GM12878 (cell line): ENCODE measurements at regions of chr1 and their contacts with region 1.

Region 1: DNA sequence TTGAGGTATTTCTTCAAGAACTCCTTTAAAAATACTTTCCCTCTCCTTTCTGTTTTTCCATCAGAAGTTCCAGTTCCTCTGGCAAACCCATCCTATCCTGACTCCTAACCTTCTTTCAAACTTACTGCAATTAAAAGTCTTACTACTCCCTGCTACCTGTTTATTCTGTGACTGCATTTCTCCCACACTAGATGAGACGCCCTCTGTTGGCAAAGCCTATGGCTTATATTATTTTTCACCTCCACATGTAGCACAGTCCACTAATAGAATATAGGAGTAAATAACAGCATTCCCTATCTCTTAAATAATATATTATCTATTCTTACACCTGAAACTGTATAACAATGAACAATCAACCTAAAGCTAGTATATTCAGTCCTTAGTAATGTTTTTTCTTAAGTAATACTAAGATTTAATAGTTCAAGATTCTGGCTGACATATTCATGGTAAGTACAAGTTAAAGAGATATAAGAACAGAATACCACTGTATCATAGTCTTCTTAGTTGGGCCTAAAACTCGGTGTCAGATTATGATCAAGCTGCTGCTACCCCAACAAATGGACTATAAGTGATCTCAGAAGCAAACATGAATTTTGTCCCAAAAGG is 54.8 kb downstream of the RAB3GAP2 start:
- DNase-seq: no peak
- ATAC-seq: peak; percentile 14; the same call in 1 of the 3 replicates
- H3K4me3 ChIP-seq: no peak overlapping the region
- H3K27ac ChIP-seq: no peak overlapping the region
- H3K4me1 ChIP-seq: peaks cover 14% of the 10 kb centered on the region
- H3K27me3 ChIP-seq: no peaks in the 10 kb centered on the region
- CTCF ChIP-seq: peak; percentile 45 to 54 (median 53); a peak in 5 of 6 replicates
- EP300 ChIP-seq: no peak
- POLR2A ChIP-seq: no peak
- RAD21 ChIP-seq: peak; percentile 37

Region 2: DNA sequence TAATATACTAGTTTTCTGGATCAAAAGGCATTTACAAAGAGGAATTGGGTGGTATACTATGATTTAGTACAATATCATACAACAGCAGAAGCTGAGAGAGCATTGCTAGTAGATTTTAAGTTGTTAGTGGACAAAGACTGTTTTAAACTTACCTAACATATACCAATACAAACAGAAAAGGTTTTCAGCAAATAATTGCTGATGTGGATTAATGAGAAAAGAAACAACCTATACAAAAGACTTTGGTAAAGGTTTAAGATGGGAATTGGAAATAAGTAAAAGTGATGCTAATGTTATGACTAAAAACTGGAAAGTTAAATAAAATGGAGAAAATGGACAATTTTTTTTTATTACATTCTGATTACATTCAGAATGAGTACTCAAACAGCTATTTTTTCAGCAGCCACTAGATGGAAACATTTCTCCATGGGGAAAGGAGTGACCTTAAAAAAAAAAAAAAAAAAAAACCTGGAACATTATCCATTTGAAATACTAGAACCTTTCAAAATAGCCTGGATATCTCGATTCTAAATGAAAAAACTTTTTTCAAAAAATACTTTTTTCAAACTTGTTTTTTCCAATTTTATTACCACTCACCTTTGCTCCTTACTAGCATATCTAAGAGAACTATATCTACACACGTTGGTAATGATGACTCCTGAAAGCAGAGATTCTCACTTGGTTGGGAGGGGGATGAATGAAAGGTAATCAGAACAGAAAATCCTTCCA is 226.5 kb before region 1 on chr1:
- CTCF ChIA-PET with region 1: interaction called, 52 read pairs
- POLR2A ChIA-PET with region 1: interaction called, 6 read pairs
- RAD21 ChIA-PET with region 1: interaction called, 18 read pairs
- SMC1A ChIA-PET with region 1: interaction called, 7 read pairs
- in situ Hi-C with region 1: no loop called
- intact Hi-C with region 1: no loop called
- DNase-seq: no peak
- ATAC-seq: no peak
- H3K4me3 ChIP-seq: no peak overlapping the region
- H3K27ac ChIP-seq: no peak overlapping the region
- H3K4me1 ChIP-seq: peaks cover 4% of the 10 kb centered on the region
- H3K27me3 ChIP-seq: no peaks in the 10 kb centered on the region
- CTCF ChIP-seq: peak; percentile 46 to 55 (median 52); a peak in 5 of 6 replicates
- EP300 ChIP-seq: no peak
- POLR2A ChIP-seq: no peak
- RAD21 ChIP-seq: peak; percentile 62

Region 3: DNA sequence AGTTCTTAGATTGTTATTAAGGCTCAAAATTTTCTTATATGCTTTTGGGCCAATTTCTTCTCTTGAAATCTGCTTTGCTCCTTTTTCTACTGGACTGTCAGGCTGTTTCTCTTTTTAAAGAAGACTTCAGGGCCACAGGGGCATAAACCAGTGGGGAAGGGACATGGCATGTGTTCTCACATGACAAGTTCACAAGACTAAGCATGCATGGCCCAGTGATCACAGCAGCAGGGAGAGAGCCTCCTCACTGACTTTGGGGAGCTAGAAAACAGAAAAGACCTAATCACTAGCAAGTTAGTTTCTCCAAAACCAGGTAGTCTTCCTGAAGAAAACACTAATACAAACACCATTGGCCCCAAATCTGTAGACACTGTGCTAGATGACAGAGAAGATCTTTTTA is 10.1 kb before region 1 on chr1:
- CTCF ChIA-PET with region 1: interaction called, 15 read pairs
- POLR2A ChIA-PET with region 1: no interaction called
- RAD21 ChIA-PET with region 1: interaction called, 6 read pairs
- SMC1A ChIA-PET with region 1: interaction called, 6 read pairs
- in situ Hi-C with region 1: no loop called
- intact Hi-C with region 1: no loop called
- DNase-seq: no peak
- ATAC-seq: no peak
- H3K4me3 ChIP-seq: no peak overlapping the region
- H3K27ac ChIP-seq: no peak overlapping the region
- H3K4me1 ChIP-seq: no peaks in the 10 kb centered on the region
- H3K27me3 ChIP-seq: no peaks in the 10 kb centered on the region
- CTCF ChIP-seq: no peak
- EP300 ChIP-seq: no peak
- POLR2A ChIP-seq: no peak
- RAD21 ChIP-seq: no peak

Region 4: DNA sequence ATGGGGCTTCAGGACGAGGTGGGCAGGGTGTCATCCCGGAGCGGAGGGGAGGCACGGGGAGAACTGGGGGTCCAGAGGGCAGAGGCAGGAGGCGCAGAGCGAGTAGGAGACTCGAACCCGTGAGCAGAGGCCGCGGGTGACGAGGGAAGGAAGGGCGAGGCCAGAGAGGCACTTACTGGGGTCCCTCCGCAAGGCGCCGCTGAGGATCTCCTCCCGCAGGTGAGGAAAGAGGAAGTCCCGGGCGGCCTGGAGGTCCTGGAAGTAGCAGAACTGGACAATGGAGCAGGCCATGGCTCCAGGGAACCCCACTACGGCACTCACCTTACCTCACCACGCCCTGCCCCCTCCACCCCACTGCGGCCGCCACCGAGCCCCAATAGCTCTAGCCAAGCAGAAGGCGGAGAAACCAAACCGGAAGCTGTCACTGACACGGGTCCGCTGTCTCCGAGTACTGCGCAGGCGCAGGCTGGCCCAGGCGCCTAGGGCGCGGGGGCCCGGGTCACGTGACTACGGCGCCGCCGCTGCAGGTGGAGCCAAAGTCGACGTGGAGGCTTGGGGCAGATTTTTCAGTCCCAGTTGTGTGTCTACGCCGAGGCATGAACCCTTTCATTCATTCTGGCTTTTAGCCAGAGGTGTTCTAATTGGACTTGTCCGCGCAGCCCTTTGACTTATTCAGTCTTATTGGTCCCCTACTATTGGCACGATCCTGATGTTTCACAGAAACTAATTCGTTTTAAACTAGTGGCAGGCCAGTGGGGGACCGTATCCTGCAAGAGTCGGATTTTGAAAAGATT is 54.8 kb after region 1 on chr1 and contains the start of gene RAB3GAP2:
- CTCF ChIA-PET with region 1: interaction called, 43 read pairs
- POLR2A ChIA-PET with region 1: interaction called, 55 read pairs
- RAD21 ChIA-PET with region 1: interaction called, 189 read pairs
- SMC1A ChIA-PET with region 1: interaction called, 250 read pairs
- in situ Hi-C with region 1: no loop called
- intact Hi-C with region 1: loop called (anchors 1 kb)
- DNase-seq: peak; percentile 89
- ATAC-seq: peak; percentile 95
- H3K4me3 ChIP-seq: peak within 1 kb of the TSS; percentile 96
- H3K27ac ChIP-seq: peak within 1 kb of the TSS; percentile 93
- H3K4me1 ChIP-seq: peaks cover 5% of the 10 kb centered on the region; the same call in 1 of the 2 replicates
- H3K27me3 ChIP-seq: no peaks in the 10 kb centered on the region
- CTCF ChIP-seq: no peak
- EP300 ChIP-seq: peak in 1 of 2 experiments; percentile 53; a peak in 1 of 4 replicates
- POLR2A ChIP-seq: peak; percentile 97
- RAD21 ChIP-seq: no peak
- polyA plus RNA-seq, gene RAB3GAP2: 11.9 to 15.6 TPM

Region 5: GRCh38 chr1:220294846-220295301 is 77.4 kb after region 1 on chr1:
- CTCF ChIA-PET with region 1: interaction called, 84 read pairs
- POLR2A ChIA-PET with region 1: interaction called, 5 read pairs
- RAD21 ChIA-PET with region 1: interaction called, 50 read pairs
- SMC1A ChIA-PET with region 1: interaction called, 26 read pairs
- in situ Hi-C with region 1: no loop called
- intact Hi-C with region 1: loop called (anchors 2 kb)
- DNase-seq: no peak
- ATAC-seq: no peak
- H3K4me3 ChIP-seq: no peak overlapping the region
- H3K27ac ChIP-seq: no peak overlapping the region
- H3K4me1 ChIP-seq: no peaks in the 10 kb centered on the region
- H3K27me3 ChIP-seq: no peaks in the 10 kb centered on the region
- CTCF ChIP-seq: no peak
- EP300 ChIP-seq: no peak
- POLR2A ChIP-seq: no peak
- RAD21 ChIP-seq: no peak

Region 6: DNA sequence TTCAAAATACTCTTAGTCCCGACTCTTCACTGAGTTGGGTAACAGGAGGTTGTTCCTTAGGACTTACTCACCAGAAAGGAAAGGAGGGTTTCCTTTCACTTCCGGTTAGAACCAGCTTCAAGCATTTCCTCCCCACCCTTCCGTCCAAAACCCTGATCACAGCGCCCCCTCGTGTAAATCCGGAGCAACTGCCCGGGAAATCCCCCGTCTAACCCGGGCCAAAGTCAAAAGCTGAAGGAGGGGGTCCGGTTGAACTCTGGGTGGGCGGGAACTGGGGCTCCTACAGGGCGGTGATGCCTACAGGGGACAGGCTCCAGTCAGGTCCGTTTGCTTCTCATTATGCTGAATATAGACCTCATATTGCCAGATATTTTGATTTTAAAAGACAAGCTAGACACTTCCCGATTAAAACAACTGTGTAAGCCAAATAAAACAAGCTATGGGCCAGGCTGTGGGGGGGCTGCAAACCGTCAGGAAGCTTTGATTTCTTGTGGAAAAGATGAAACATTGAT is 515.7 kb after region 1 on chr1:
- CTCF ChIA-PET with region 1: interaction called, 35 read pairs
- POLR2A ChIA-PET with region 1: no interaction called
- RAD21 ChIA-PET with region 1: interaction called, 31 read pairs
- SMC1A ChIA-PET with region 1: interaction called, 11 read pairs
- in situ Hi-C with region 1: no loop called
- intact Hi-C with region 1: no loop called
- DNase-seq: peak; percentile 13
- ATAC-seq: peak; percentile 96
- H3K4me3 ChIP-seq: no peak overlapping the region
- H3K27ac ChIP-seq: no peak overlapping the region
- H3K4me1 ChIP-seq: no peaks in the 10 kb centered on the region
- H3K27me3 ChIP-seq: no peaks in the 10 kb centered on the region
- CTCF ChIP-seq: peak; percentile 78 to 81 (median 80)
- EP300 ChIP-seq: no peak
- POLR2A ChIP-seq: no peak
- RAD21 ChIP-seq: peak; percentile 91

Region 7: GRCh38 chr1:220810179-220810653 is 592.7 kb after region 1 on chr1:
- CTCF ChIA-PET with region 1: no interaction called
- POLR2A ChIA-PET with region 1: no interaction called
- RAD21 ChIA-PET with region 1: no interaction called
- SMC1A ChIA-PET with region 1: no interaction called
- in situ Hi-C with region 1: no loop called
- intact Hi-C with region 1: no loop called
- DNase-seq: peak; percentile 8
- ATAC-seq: peak; percentile 95
- H3K4me3 ChIP-seq: no peak overlapping the region
- H3K27ac ChIP-seq: no peak overlapping the region
- H3K4me1 ChIP-seq: no peaks in the 10 kb centered on the region
- H3K27me3 ChIP-seq: no peaks in the 10 kb centered on the region; a peak in 1 of 4 replicates
- CTCF ChIP-seq: peak; percentile 93 to 96 (median 94); a peak in 5 of 6 replicates
- EP300 ChIP-seq: no peak
- POLR2A ChIP-seq: no peak
- RAD21 ChIP-seq: peak; percentile 75